Mammary epithelial cell (primary cell): ENCODE measurements at regions of chr11 and their contacts with region 1.

Region 1: DNA sequence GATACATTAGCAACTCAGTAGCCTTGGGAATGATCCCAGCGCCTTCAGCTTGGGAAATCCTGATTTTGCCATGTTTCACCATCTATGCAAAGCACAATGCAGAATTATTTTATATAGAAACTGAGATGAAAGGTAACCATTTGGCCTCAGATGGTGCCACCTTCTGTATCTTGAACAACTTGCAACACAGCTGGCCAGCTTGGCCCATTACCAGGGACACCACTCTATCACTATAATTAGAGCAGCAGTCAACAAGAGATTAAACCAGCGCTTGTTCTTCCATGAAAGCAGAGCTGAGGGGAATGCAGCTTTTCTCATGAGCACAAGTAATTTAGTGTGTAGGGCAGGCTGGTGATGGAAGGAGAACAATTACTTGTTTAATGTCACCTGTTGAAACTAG is 6.7 kb upstream of the ZDHHC13 start:
- DNase-seq: no peak
- H3K4me3 ChIP-seq: no peak overlapping the region
- H3K27ac ChIP-seq: no peak overlapping the region
- H3K4me1 ChIP-seq: no peaks in the 10 kb centered on the region
- H3K27me3 ChIP-seq: no peaks in the 10 kb centered on the region
- CTCF ChIP-seq: peak in 1 of 2 donors; percentile 21

Region 2: GRCh38 chr11:18912883-18913282 is 197.4 kb before region 1 on chr11:
- CTCF ChIA-PET with region 1: no interaction called
- dilution Hi-C with region 1: no loop called
- in situ Hi-C with region 1: no loop called
- intact Hi-C with region 1: no loop called
- DNase-seq: no peak
- H3K4me3 ChIP-seq: no peak overlapping the region
- H3K27ac ChIP-seq: no peak overlapping the region
- H3K4me1 ChIP-seq: no peaks in the 10 kb centered on the region
- H3K27me3 ChIP-seq: peaks cover 10% of the 10 kb centered on the region
- CTCF ChIP-seq: no peak

Region 3: DNA sequence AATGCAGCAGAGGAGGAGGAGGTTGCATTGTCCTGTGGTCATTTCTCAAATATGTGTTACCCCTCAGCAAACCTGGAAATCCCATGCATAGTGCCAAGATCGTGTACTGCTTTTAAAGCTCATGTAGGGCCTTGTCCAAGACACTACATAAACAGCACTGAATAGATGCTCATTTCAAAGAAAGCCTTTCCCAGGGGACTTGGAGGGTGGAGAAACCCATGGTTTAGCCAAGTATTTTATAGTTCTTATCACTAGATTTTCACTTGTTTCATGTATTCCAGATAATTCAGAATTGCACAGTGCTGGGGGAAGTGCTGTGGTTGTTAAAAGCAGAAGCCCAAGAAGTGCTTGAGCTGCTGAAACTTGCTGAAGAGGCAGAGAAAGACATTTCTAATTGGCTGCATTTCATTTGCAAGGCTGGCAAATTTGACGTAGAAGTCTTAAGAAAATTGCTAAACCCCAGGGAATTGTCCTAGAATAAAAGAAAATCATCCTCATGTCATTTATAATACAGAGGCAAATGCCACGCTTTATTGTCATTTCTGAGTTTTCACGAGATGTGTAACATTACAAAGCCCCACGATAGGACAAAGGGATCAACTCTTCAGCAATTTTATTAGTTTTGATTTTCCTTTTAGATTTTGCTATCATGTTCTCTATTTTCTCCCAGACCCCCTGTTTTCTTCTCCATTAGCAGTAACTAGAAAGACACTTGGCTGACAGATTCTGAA is 71.4 kb after region 1 on chr11:
- CTCF ChIA-PET with region 1: no interaction called
- dilution Hi-C with region 1: loop called (anchors 5 kb)
- in situ Hi-C with region 1: no loop called
- intact Hi-C with region 1: no loop called
- DNase-seq: no peak
- H3K4me3 ChIP-seq: no peak overlapping the region
- H3K27ac ChIP-seq: no peak overlapping the region
- H3K4me1 ChIP-seq: no peaks in the 10 kb centered on the region
- H3K27me3 ChIP-seq: no peaks in the 10 kb centered on the region
- CTCF ChIP-seq: no peak